Posterior cingulate gyrus (tissue), 11 donors: ENCODE measurements at regions of chr6 and their contacts with region 1.

Region 1: GRCh38 chr6:125790358-125791150 is at the start of gene NCOA7:
- DNase-seq: peak; percentile 77 to 97 (median 84)

Region 2: DNA sequence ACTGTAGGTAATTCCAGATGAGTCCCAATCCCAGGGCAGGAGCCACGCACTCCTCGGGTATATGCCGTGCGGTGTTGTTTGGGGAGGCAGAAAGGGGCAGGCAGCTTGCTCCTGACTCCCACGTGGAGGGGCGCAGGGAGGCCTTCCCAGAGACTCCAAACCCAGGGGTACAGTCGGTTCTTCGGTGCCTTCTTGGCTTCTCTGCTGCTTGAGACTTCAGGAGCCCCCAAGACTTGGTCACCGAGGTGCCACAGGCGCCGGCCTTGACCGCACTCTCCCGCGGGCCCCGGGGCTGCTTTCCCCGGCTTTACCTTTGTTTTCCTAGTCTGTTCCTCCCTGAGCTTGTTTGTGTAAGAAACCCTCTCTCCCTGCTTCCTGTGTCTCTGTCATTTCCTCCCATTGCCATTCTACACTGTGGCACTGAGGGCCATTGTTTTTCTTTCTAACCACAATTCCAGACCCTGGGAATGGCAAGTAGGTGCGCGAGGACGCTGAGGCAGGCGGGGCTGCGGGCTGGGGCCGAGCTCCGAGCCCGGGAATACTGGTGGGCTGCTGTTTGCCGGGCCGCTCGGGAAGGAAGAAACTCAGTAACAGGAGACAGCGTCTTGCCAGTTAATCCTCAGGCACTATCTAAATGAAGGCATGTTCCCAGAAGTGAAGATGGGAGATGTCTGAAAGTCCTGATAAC is 256.7 kb before region 1 on chr6:
- intact Hi-C with region 1: no loop called
- DNase-seq: peak in 1 of 10 donors; percentile 68

Region 3: GRCh38 chr6:125844989-125845388 is 54.4 kb after region 1 on chr6:
- intact Hi-C with region 1: loop called (anchors 5 kb)
- DNase-seq: no peak

Region 4: GRCh38 chr6:125858427-125859320 is 68.1 kb after region 1 on chr6:
- intact Hi-C with region 1: loop called (anchors 5 kb)
- DNase-seq: peak in 7 of 10 donors; percentile 30 to 92 (median 63)